Caco-2 (cell line): ENCODE measurements at regions of chr6 and their contacts with region 1.

Region 1: GRCh38 chr6:116279260-116280063 is at the start of gene TSPYL1:
- DNase-seq: peak; percentile 94
- H3K4me3 ChIP-seq: peak within 1 kb of the TSS; percentile 58
- H3K4me3 Mint-ChIP-seq: peak within 1 kb of the TSS; percentile 90
- H3K27ac Mint-ChIP-seq: peak within 1 kb of the TSS; percentile 87
- H3K4me1 ChIP-seq: peaks cover 18% of the 10 kb centered on the region
- H3K4me1 Mint-ChIP-seq: peaks cover 24% of the 10 kb centered on the region
- H3K27me3 ChIP-seq: no peaks in the 10 kb centered on the region
- H3K27me3 Mint-ChIP-seq: no peaks in the 10 kb centered on the region
- CTCF ChIP-seq: no peak
- total RNA-seq, gene TSPYL1: 55.0 and 57.3 TPM in 2 replicates

Region 2: DNA sequence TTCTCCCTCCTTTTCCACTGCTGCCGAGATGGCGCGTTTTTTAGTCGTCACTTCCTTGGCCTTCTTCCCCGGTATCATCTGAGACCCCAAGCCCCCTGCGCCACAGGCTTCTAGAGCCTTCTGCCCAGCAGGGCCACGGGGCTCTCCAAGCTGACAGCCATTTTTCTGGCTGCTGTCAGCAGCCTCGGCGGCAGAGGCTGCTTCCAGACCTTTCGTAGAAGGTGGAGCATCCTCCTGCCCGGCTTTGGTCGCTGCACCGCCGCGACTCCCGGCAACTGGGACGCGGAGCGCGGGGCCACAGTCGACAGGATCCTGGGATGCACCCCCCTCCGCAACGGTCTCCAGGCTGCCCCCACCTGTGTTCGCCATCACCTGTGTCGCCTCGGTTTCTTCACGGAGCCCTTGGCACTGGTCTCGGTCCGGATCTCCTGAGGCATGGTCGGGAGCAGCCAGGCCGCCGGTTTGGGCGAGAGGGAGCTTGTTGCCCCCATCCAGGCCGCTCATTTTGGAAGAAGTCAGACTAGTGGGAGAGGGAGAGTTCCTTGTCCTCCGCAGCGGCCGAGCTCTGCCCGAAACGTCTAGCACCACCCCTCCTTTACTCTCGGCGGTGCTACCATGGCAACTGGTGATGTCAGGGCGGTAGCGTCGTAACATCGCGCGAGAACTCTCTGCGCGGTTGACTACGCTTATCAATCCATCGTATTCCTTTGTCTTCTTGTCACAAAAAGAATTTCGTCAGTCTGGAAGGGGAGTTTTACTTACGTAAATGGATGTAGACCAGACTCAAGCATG is 25.8 kb before region 1 on chr6 and contains the start of gene TSPYL4:
- CTCF ChIA-PET with region 1: no interaction called
- POLR2A ChIA-PET with region 1: interaction called, 6 read pairs
- intact Hi-C with region 1: loop called (anchors 2 kb)
- DNase-seq: peak; percentile 92
- H3K4me3 ChIP-seq: peak within 1 kb of the TSS; percentile 99
- H3K4me3 Mint-ChIP-seq: no peak within 1 kb of the TSS
- H3K27ac Mint-ChIP-seq: no peak within 1 kb of the TSS
- H3K4me1 ChIP-seq: peaks cover 19% of the 10 kb centered on the region
- H3K4me1 Mint-ChIP-seq: peaks cover 16% of the 10 kb centered on the region
- H3K27me3 ChIP-seq: no peaks in the 10 kb centered on the region
- H3K27me3 Mint-ChIP-seq: no peaks in the 10 kb centered on the region
- CTCF ChIP-seq: no peak
- total RNA-seq, gene TSPYL4: 10.7 and 10.9 TPM in 2 replicates

Region 3: GRCh38 chr6:116298973-116299372 is 19.5 kb after region 1 on chr6:
- CTCF ChIA-PET with region 1: no interaction called
- POLR2A ChIA-PET with region 1: no interaction called
- intact Hi-C with region 1: no loop called
- DNase-seq: no peak
- H3K4me3 ChIP-seq: no peak overlapping the region
- H3K4me3 Mint-ChIP-seq: no peak overlapping the region
- H3K27ac Mint-ChIP-seq: no peak overlapping the region
- H3K4me1 ChIP-seq: no peaks in the 10 kb centered on the region
- H3K4me1 Mint-ChIP-seq: no peaks in the 10 kb centered on the region
- H3K27me3 ChIP-seq: no peaks in the 10 kb centered on the region; the same call in 1 of the 2 replicates
- H3K27me3 Mint-ChIP-seq: peaks cover 9% of the 10 kb centered on the region
- CTCF ChIP-seq: no peak

Region 4: DNA sequence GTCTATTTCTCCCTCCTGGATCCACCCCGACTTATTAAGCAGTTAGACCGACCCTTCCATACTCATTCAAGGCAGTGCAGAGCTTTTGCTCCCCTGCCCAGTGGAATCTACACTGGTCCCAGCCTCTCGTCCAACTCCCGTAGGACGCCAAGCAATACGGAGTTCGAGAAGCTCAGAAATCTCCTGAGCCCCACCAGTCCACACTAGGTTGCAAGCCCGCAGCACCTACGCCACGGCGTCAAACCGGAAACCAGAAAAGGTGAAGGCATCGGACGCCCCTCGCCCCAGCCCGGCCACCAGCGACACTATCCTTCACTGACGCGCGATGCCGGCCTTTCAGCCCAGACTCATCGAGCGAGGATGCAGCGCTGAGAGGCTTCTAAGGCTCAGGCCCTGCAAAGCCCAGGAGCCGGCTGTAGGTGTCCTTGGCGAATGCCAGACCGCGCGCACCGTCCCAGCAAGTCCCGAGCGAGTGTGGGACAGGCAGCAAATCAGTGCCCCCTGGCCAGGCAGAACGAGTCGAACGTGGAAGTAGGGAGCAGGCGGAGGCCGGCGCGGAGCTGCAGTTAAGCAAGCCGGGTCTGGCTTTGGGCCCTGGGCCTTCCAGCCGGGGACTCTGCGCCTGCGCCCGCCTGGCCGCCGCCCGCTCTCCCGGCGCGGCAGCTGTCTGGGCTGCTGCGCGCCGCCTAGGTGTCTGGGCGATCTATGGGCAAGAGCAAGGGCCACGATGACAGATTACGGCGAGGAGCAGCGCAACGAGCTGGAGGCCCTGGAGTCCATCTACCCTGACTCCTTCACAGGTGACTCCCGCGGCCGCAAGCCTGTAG is 291.6 kb after region 1 on chr6 and contains the start of gene RWDD1:
- CTCF ChIA-PET with region 1: no interaction called
- POLR2A ChIA-PET with region 1: interaction called, 3 read pairs
- intact Hi-C with region 1: loop called (anchors 2 kb)
- DNase-seq: peak; percentile 99
- H3K4me3 ChIP-seq: peak within 1 kb of the TSS; percentile 96
- H3K4me3 Mint-ChIP-seq: peak within 1 kb of the TSS; percentile 98
- H3K27ac Mint-ChIP-seq: peak within 1 kb of the TSS; percentile 99
- H3K4me1 ChIP-seq: peaks cover 6% of the 10 kb centered on the region; the same call in 1 of the 2 replicates
- H3K4me1 Mint-ChIP-seq: peaks cover 7% of the 10 kb centered on the region
- H3K27me3 ChIP-seq: no peaks in the 10 kb centered on the region
- H3K27me3 Mint-ChIP-seq: no peaks in the 10 kb centered on the region
- CTCF ChIP-seq: no peak
- total RNA-seq, gene RWDD1: 35.0 and 37.9 TPM in 2 replicates